Right ventricle myocardium superior (tissue), 1 donor: ENCODE measurements at regions of chr18 and their contacts with region 1.

Region 1: DNA sequence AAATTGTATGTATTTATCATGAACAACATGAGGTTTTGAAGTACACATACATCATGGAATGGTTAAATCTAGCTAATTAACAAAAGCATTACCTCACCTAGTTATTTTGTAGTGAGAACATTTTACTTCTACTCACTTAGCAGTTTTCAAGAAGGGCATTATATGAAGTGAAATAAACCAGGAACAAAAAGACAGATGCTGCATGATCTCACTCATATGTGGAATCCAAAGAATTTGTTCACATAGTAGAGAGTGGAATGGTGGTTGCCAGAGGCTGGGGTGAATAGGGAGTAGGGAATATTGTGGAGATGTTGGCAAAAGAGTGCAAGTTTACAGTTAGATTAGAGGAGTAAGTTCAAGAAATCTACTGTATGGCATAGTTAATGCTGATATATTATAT is 292.0 kb downstream of the ASXL3 start:
- DNase-seq: no peak
- ATAC-seq: no peak

Region 2: DNA sequence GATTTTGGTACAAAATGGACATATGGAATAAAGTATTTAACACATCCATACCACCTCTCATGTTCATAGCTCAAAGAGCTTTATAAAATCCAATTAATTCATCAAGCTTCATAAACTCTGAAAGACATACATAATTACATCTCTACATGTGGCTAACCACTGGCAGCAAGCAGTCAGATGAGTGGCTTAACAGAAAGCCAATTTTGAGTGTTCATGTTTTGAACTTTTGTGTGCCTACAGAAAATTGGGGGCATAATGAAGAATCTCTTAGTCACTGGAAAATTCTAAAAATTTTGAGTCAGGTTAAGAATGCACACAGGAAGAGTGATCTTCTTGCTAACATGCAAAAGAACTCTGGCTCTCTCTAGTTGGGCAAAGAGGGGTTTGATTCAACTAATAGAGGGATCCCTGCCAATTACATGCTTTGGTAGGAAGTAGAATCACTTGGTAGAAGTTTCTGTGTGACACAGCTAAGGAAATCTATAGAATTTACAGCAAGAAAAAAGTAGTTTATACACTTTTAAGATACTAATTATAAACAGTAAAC is 67.3 kb after region 1 on chr18:
- intact Hi-C with region 1: loop called (anchors 10 kb)
- DNase-seq: no peak
- ATAC-seq: no peak